ENCODE measurements at regions of chr5 and their contacts with region 1.

Region 1: GRCh38 chr5:40437452-40437861 is 242.3 kb upstream of the PTGER4 start:
- DNase-seq: peak; percentile 50
- H3K4me3 Mint-ChIP-seq: no peak overlapping the region
- H3K27ac Mint-ChIP-seq: peak overlapping the region; percentile 81
- H3K4me1 Mint-ChIP-seq: peaks cover 69% of the 10 kb centered on the region
- H3K27me3 Mint-ChIP-seq: no peaks in the 10 kb centered on the region

Region 2: DNA sequence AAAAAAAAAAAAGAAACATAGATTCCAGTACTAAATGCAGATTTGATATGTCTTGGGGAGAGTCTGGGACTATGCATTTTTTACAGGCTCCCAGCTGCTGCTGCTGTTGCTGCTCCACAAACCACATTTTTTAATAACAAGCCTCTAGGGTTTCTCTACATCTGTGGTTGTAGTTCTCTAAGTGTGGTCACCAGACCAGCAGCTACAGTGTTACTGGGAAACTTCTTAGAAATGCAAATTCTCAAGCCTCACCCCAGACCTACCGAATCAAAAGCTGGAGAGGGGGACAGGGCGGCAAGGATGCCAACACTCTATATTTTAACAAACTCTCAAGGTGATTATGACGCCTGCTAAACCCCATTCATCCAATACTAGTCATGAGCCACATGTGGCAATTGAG is 51.2 kb before region 1 on chr5:
- CTCF ChIA-PET with region 1: interaction called, 3 read pairs
- POLR2A ChIA-PET with region 1: interaction called, 26 read pairs
- DNase-seq: peak; percentile 52
- H3K4me3 Mint-ChIP-seq: no peak overlapping the region
- H3K27ac Mint-ChIP-seq: peak overlapping the region; percentile 53
- H3K4me1 Mint-ChIP-seq: peaks cover 87% of the 10 kb centered on the region
- H3K27me3 Mint-ChIP-seq: no peaks in the 10 kb centered on the region

Region 3: DNA sequence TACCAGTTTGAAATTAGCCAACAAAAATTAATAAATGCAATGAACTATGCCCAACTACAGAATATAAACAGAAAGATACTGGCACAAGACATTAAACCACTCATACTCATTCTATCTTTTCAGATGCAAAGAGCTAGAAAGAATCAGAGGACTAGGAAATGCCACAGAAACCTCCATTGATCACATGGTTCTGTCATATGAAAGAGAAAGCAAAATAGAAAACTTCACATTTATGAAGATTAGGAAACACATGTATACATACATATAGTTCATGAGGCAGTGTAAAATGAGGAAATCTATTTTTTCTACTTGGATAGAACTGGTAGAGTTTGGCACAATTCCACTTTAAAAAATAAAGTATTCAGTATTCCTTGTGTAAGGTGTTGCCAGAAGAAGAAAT is 32.8 kb before region 1 on chr5:
- CTCF ChIA-PET with region 1: interaction called, 22 read pairs
- POLR2A ChIA-PET with region 1: interaction called, 91 read pairs
- DNase-seq: no peak
- H3K4me3 Mint-ChIP-seq: peak overlapping the region; percentile 12
- H3K27ac Mint-ChIP-seq: peak overlapping the region; percentile 95
- H3K4me1 Mint-ChIP-seq: peaks cover 76% of the 10 kb centered on the region
- H3K27me3 Mint-ChIP-seq: no peaks in the 10 kb centered on the region

Region 4: GRCh38 chr5:40410231-40410861 is 27.1 kb before region 1 on chr5:
- CTCF ChIA-PET with region 1: interaction called, 22 read pairs
- POLR2A ChIA-PET with region 1: interaction called, 91 read pairs
- DNase-seq: peak; percentile 76
- H3K4me3 Mint-ChIP-seq: peak overlapping the region; percentile 63
- H3K27ac Mint-ChIP-seq: peak overlapping the region; percentile 90
- H3K4me1 Mint-ChIP-seq: peaks cover 55% of the 10 kb centered on the region
- H3K27me3 Mint-ChIP-seq: no peaks in the 10 kb centered on the region

Region 5: DNA sequence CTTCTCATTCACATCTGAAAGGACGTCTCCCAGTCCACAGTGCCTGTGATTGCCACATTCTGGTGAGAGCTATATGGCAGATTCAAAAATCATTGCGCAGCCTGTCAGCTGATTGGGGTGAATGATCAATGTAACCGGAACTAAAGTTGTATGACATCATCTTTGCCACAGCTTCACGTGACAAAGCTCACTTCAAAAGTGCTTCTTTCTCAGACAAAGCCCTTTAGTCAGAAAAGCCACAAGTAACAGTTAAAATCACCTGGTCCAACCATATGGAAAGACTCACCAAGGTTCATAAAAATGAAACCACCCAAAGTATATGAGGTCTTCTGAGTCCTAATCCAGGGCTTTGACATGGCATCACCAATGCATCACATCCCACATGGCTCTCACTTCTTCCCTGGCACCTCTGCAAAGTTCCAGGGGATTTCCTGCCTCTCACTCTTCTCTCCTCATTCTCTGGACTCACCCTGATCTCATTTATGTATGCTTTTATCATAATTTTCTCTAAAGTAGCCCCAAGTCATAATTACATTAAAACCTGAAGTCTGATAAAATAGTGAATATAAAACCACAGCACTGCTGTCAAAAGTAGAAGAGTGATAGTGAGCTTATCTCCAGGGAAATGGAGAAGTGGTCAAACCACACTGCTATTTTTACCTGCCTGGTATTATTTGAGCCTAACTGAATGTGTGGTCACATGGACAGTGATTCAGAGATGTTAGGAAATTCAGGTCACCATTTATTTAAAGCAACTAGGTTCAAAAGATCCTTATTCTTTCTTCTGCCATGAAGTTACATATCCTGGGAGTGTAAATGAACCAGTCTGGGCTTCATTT is 49.2 kb after region 1 on chr5:
- CTCF ChIA-PET with region 1: interaction called, 3 read pairs
- POLR2A ChIA-PET with region 1: interaction called, 15 read pairs
- DNase-seq: peak; percentile 71
- H3K4me3 Mint-ChIP-seq: peak overlapping the region; percentile 14
- H3K27ac Mint-ChIP-seq: peak overlapping the region; percentile 88
- H3K4me1 Mint-ChIP-seq: peaks cover 80% of the 10 kb centered on the region
- H3K27me3 Mint-ChIP-seq: no peaks in the 10 kb centered on the region

Region 6: DNA sequence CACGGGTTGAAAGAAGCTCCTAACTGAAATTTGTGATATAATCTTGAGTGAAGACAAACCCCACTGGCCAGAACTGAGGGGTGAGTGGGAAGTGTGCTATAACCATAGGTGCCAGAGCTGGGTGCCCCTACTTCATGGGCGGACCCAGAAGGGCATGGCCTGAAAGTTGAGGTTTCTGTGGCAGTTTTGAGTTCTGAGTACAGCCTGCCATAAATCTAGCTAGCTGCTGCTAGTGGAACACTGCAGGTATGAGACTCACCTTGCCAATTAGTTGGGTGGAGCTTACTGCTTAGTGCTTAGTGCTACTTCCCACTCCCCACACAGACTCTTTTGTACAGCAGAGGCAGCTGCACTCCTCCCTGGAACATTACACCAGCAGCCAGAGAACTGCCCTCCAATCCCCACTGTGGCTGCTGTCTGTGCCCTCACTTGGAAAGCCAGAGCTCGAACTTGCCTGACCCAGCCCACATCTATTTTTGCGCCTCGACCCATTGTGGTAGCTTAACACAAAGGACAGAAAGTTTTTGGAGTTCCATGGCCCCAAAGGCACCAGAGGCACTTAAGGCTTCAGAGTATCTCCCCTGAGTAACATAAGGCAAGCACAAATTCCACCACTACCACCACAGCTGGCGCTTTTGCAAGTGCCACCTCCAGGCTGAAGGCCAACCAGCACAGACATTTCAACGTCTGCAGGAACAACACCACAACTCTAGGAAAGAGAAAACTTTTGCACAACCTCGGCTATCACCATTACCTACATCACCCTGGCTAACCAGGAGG is 215.2 kb after region 1 on chr5:
- CTCF ChIA-PET with region 1: no interaction called
- POLR2A ChIA-PET with region 1: interaction called, 11 read pairs
- DNase-seq: peak; percentile 45
- H3K4me3 Mint-ChIP-seq: peak overlapping the region; percentile 84
- H3K27ac Mint-ChIP-seq: peak overlapping the region; percentile 94
- H3K4me1 Mint-ChIP-seq: peaks cover 77% of the 10 kb centered on the region
- H3K27me3 Mint-ChIP-seq: no peaks in the 10 kb centered on the region

Region 7: GRCh38 chr5:40688127-40688761 is 250.8 kb after region 1 on chr5:
- CTCF ChIA-PET with region 1: interaction called, 6 read pairs
- POLR2A ChIA-PET with region 1: interaction called, 51 read pairs
- DNase-seq: peak; percentile 90
- H3K4me3 Mint-ChIP-seq: peak overlapping the region; percentile 78
- H3K27ac Mint-ChIP-seq: peak overlapping the region; percentile 85
- H3K4me1 Mint-ChIP-seq: peaks cover 75% of the 10 kb centered on the region
- H3K27me3 Mint-ChIP-seq: no peaks in the 10 kb centered on the region

Measured in activated CD4-positive, alpha-beta memory T cell treated with anti-CD3 and anti-CD28 coated beads, Interleukin-2, amount 10 ng/mL, durations not matched to agents 7 days and 5 days (primary cell).